PC-3 (cell line): ENCODE measurements at regions of chr21 and their contacts with region 1.

Region 1: DNA sequence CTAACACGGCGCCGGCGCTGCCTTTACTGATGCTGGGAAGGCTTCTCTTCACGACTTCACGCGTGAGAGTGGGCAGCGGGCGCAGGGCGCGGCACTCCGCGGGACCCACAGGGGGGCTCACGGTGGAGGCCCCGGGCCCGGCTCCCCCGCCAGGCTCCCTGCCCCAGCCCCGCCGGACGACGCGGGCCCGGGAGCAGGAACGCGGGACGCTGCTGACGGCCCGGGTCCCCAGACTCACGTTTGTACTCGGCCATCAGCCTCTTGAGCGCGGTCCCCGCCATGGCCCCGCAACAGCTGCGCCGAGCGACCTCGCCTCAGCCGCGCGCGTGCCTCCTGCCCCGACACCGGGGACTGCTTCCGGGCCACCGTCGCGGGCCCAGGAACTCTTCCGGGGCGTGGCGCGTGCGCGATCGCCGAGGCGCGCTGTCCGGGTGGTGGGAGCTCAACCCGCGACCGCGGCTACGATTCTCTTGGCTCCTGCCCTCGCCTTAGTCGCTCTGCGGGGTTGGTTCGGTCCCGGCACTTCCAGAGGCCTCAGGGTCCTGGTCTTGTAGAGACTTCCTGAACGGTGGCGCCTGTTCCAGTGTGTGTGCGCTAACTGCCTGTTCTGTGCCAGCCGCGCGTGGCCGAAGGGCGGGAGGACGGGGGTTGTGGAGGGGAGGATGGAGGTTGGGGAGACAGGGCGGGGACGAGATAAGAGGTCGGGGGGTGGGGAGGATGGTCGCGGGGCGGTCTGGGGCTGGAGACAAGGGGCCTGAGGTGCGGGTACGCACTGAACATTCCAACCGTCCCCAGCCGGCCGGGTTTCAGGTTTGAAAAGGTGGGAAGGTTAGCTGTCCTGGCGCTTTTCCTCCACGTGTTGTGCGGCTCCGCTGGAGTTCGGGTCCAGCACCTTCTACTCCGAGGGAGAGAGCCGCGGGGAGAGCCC is at the start of gene UBE2G2:
- DNase-seq: peak; percentile 86
- ATAC-seq: peak; percentile 81
- H3K4me3 ChIP-seq: peak within 1 kb of the TSS; percentile 94
- H3K27ac ChIP-seq: peak within 1 kb of the TSS; percentile 69
- H3K4me1 ChIP-seq: peaks cover 22% of the 10 kb centered on the region
- H3K27me3 ChIP-seq: no peaks in the 10 kb centered on the region
- CTCF ChIP-seq: no peak
- total RNA-seq, gene UBE2G2: 159 and 189 TPM in 2 replicates

Region 2: DNA sequence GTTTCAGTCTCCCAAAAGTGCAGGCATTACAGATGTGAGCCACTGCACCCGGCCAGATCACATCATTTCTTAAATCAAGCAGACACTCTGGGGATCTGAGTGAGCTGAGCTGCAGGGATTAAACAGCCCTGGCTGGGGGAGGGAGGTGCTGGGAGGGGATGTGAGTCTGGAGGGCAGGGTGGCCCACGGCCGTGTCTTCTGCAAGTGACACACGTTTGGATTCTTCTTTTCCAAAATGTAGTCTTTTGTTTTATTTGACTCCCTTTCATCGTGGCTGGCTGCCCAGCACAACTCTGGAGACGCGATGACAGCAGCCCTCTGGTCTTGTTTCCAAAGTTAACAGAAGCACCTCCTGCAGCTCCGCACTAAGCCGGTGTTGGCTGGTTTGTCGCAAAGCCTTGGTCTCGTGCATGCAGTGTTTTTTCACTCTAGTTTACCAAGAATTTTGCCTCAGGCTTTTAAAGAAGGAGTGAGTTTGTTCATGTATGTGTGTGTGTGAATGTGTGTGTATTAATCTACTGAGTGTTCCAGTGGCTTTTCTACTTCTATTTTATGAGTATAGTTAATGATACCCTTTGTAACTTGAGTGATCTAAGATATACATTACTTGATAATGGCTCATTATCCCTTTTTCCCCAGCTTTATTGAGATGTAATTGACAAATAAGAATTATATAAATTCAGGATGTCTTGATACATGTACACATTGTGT is 218.5 kb before region 1 on chr21:
- CTCF ChIA-PET with region 1: no interaction called
- POLR2A ChIA-PET with region 1: interaction called, 22 read pairs
- intact Hi-C with region 1: no loop called
- DNase-seq: peak; percentile 12
- ATAC-seq: no peak
- H3K4me3 ChIP-seq: no peak overlapping the region
- H3K27ac ChIP-seq: no peak overlapping the region
- H3K4me1 ChIP-seq: peaks cover 10% of the 10 kb centered on the region; the same call in 1 of the 2 replicates
- H3K27me3 ChIP-seq: no peaks in the 10 kb centered on the region
- CTCF ChIP-seq: no peak

Region 3: DNA sequence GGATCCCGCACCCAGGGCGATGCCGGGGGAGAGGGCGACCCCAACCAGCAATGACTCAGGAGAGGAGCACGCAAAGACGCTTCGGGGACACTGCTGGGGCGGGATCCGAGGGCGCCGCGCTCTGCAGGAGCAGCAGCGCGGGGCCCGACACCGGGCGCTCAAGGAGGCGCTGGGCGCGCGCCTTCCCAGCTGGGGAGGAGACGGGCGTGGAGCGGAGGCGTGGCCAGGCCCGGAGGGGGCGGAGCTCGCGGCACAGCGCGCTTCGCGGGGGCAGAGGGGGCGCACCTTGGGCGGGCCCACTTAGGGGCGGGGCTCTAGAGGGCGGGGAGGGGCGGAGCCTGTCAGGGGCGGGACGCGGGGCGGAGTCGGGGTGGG is 15.8 kb after region 1 on chr21:
- CTCF ChIA-PET with region 1: no interaction called
- POLR2A ChIA-PET with region 1: interaction called, 5 read pairs
- intact Hi-C with region 1: loop called (anchors 2 kb)
- DNase-seq: peak; percentile 92
- ATAC-seq: peak; percentile 89
- H3K4me3 ChIP-seq: peak overlapping the region; percentile 99
- H3K27ac ChIP-seq: peak overlapping the region; percentile 59
- H3K4me1 ChIP-seq: peaks cover 12% of the 10 kb centered on the region
- H3K27me3 ChIP-seq: no peaks in the 10 kb centered on the region
- CTCF ChIP-seq: no peak

Region 4: DNA sequence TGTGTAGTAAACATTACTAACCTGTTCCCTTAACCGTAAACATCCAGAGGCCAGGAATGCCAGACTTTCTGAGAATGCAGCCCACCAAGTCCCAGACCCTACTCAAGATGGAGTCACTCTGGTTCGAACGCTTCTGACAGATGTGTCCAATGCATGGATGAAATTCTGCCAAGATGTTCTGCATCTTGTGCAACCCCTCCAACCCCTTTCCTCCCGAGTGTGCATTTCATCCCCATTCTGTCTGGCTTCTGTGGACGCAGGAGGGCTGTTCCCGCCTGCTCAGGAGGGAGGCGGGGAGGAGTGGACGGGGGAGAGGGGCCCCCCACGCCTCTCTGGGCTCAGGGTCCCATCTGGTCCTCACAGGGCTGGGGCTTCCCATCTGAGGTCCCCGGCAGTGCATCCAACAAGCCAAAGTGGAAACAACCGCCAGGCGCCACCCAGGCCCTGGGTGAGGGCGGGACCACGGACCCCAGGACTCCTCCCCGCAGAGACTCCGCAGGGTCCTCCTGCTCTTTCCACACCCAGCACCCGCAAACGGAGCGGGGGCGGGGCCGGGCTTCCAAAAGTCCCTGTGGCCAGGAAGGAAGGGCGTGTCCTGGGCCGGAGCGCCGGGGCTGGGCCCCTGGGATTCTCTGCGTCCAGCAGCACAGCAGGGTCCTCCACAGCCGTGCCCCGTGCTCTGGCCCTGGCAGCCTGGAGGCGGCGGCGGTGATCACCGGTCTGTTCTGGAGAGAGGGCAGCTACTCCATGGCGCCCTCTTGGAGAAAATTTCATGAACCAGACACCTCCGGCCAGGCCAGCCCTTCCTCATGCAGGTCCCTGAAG is 43.9 kb after region 1 on chr21:
- CTCF ChIA-PET with region 1: no interaction called
- POLR2A ChIA-PET with region 1: no interaction called
- intact Hi-C with region 1: loop called (anchors 2 kb)
- DNase-seq: peak; percentile 66
- ATAC-seq: peak; percentile 74
- H3K4me3 ChIP-seq: peak overlapping the region; percentile 36
- H3K27ac ChIP-seq: no peak overlapping the region
- H3K4me1 ChIP-seq: peaks cover 11% of the 10 kb centered on the region
- H3K27me3 ChIP-seq: no peaks in the 10 kb centered on the region
- CTCF ChIP-seq: peak; percentile 68

Region 5: DNA sequence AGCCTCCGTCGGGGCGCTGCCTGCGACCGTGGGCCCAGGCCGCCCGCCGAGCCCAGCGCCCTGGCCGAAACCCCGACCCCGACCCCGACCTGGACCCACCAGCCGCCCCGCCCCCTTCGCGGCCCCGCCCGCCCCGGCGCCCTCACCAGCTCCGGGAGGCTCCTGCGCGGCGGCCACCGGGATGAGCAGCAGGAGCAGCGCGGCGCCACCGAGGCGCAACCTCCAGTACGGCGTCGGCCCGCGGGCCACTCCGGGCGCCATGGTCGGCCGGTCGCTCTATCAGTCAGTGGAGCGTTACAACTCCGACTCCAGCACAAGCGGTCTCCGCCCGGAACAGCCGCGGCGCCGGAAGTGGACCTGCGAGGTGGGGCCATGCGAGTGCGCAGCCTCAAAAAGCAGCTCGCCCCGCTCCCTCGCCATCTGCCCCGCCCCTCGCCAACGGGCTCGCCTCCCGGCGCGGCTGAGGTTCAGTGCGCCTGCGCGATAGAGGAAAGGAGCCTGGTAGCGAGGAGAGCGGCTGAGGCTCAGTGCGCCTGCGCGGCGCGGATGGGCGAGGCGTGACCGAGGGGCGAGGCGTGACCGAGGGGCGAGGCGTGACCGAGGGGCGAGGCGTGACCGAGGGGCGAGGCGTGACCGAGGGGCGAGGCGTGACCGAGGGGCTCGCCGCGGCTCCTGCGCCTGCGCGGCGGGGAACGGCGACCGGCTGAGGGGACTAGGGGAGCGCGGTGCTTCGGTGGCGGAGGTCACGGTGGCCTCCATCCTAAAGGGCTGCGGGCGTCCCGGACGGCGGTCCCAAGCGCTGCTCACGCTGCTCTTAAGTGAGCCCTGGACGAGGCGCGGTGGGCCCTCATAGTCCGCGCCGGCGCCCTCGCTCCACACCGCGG is 71.9 kb after region 1 on chr21 and contains the start of gene PTTG1IP:
- CTCF ChIA-PET with region 1: interaction called, 6 read pairs
- POLR2A ChIA-PET with region 1: no interaction called
- intact Hi-C with region 1: loop called (anchors 1 kb)
- DNase-seq: peak; percentile 99
- ATAC-seq: peak; percentile 48
- H3K4me3 ChIP-seq: peak within 1 kb of the TSS; percentile 80
- H3K27ac ChIP-seq: peak within 1 kb of the TSS; percentile 82
- H3K4me1 ChIP-seq: peaks cover 59% of the 10 kb centered on the region
- H3K27me3 ChIP-seq: no peaks in the 10 kb centered on the region
- CTCF ChIP-seq: no peak
- total RNA-seq, gene PTTG1IP: 330 and 455 TPM in 2 replicates

Region 6: DNA sequence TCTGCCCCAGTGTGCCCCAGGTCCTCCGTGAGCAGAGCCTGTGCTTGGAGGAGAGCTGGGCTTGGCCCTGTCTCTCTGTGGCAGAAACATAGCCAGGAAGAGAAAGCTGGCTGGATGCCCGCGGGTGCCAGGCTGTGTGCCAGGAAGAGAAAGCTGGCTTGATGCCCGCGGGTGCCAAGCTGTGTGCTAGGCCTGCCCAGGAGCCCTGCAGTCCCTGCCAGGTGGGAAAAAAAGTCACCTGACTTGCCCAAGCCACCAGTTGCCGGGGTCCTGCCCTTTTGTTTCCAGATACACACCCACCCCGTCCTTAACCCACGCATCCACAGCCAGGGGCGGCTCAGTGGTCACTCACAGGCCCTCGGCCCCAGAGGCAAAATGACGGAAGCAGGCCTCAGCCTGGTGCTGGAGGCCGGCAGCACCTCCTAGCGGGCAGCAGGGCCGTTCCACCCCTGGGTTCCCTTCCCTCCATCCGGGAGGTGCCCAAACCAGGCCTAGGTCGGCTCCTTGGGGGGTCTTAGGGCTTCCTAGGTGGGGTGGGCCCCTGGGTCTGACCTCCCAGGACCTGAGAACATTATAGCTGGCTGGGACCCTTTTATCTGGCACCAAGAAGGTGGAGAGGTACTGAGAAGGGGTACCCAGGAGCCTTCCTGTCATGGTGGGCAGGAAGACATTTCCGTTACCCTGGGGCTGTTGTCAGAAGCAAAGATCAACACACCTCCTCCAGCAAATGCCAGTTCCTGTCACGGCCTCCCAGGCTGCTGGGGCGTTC is 109.8 kb after region 1 on chr21:
- CTCF ChIA-PET with region 1: interaction called, 3 read pairs
- POLR2A ChIA-PET with region 1: no interaction called
- intact Hi-C with region 1: loop called (anchors 1 kb)
- DNase-seq: peak; percentile 92
- ATAC-seq: peak; percentile 72
- H3K4me3 ChIP-seq: no peak overlapping the region
- H3K27ac ChIP-seq: peak overlapping the region; percentile 76
- H3K4me1 ChIP-seq: peaks cover 64% of the 10 kb centered on the region
- H3K27me3 ChIP-seq: no peaks in the 10 kb centered on the region
- CTCF ChIP-seq: peak; percentile 93

Region 7: GRCh38 chr21:44939532-44940115 is 137.9 kb after region 1 on chr21 and contains the start of gene SLX9:
- CTCF ChIA-PET with region 1: no interaction called
- POLR2A ChIA-PET with region 1: no interaction called
- intact Hi-C with region 1: loop called (anchors 2 kb)
- DNase-seq: peak; percentile 90
- ATAC-seq: peak; percentile 83
- H3K4me3 ChIP-seq: peak within 1 kb of the TSS; percentile 95
- H3K27ac ChIP-seq: peak within 1 kb of the TSS; percentile 61
- H3K4me1 ChIP-seq: peaks cover 30% of the 10 kb centered on the region
- H3K27me3 ChIP-seq: no peaks in the 10 kb centered on the region
- CTCF ChIP-seq: no peak
- total RNA-seq, gene SLX9: 80.1 and 94.9 TPM in 2 replicates